Heart left ventricle (tissue), 16 donors: ENCODE measurements at regions of chr3 and their contacts with region 1.

Region 1: GRCh38 chr3:53938645-53939044 is 47.0 kb upstream of the SELENOK start:
- DNase-seq: no peak
- ATAC-seq: peak in 2 of 4 donors; percentile 53 to 67
- H3K4me3 ChIP-seq: no peak overlapping the region
- H3K27ac ChIP-seq: no peak overlapping the region
- H3K4me1 ChIP-seq: no peaks in the 10 kb centered on the region
- H3K27me3 ChIP-seq: peaks cover 0 to 35% (median 2%) of the 10 kb centered on the region in 9 donors
- CTCF ChIP-seq: peak; percentile 66 to 84 (median 74)
- POLR2A ChIP-seq: no peak

Region 2: GRCh38 chr3:53436828-53437227 is 501.8 kb before region 1 on chr3:
- intact Hi-C with region 1: no loop called
- DNase-seq: no peak
- ATAC-seq: no peak
- H3K4me3 ChIP-seq: no peak overlapping the region
- H3K27ac ChIP-seq: no peak overlapping the region
- H3K4me1 ChIP-seq: no peaks in the 10 kb centered on the region
- H3K27me3 ChIP-seq: peaks cover 0 to 3% (median 0%) of the 10 kb centered on the region in 9 donors
- CTCF ChIP-seq: no peak
- POLR2A ChIP-seq: no peak

Region 3: DNA sequence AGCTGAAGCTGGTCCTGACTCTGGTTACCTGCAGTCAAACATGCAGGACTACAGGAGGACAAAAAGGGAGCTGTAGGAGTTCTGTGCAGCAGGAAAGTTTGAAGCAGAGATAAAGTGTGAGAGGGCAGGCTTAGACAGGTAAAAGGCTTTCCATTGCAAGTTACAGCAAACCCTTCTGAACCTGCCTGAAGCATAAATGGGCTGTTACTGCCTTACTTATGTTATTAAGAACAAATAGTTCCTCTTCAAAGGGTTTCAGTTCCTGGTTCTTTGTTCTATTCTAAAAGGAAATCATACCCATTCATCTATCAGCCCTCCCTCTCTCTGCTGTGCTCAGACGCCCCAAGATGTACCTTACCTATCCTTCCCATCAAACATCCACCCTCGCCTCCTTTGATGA is 131.3 kb after region 1 on chr3:
- intact Hi-C with region 1: loop called in 1 of 10 experiments (anchors 10 kb)
- DNase-seq: no peak
- ATAC-seq: no peak
- H3K4me3 ChIP-seq: no peak overlapping the region
- H3K27ac ChIP-seq: no peak overlapping the region
- H3K4me1 ChIP-seq: no peaks in the 10 kb centered on the region
- H3K27me3 ChIP-seq: peaks cover 0 to 7% (median 0%) of the 10 kb centered on the region in 9 donors
- CTCF ChIP-seq: no peak
- POLR2A ChIP-seq: no peak

Region 4: DNA sequence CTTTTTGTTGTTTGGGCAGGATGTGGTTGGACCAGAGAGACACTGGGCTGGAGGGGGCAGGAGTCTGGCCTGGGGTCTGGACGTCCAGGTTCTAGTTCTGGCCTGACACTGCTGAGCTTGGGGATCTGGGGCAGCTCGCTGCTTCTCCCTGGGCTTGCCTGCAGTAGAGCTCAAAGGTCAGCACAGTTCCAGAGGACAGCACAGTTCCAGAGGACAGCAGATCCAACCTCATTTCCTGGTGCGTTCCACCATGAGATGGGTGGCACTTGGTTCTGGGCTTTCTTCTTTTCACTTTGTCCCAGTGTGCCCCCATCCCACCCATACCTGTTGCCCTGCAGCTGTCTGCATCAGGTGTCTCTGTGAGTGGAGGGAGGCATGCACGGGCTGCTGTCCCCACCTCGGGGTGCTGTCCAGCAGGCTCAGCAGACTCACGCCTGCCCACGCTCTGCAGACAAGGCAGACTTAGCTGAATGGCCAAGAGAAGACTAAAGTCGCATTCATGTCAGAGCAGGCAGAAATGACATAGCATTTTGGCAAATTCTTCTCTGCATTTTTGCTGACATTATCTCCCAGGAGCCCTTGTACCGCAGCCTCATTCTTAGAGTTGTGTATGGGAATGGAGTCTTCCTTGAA is 200.4 kb after region 1 on chr3:
- intact Hi-C with region 1: loop called in 4 of 10 experiments (anchors 10 kb)
- DNase-seq: no peak
- ATAC-seq: peak in 3 of 4 donors; percentile 25 to 54 (median 42)
- H3K4me3 ChIP-seq: no peak overlapping the region
- H3K27ac ChIP-seq: no peak overlapping the region
- H3K4me1 ChIP-seq: no peaks in the 10 kb centered on the region
- H3K27me3 ChIP-seq: no peaks in the 10 kb centered on the region
- CTCF ChIP-seq: no peak
- POLR2A ChIP-seq: no peak

Region 5: DNA sequence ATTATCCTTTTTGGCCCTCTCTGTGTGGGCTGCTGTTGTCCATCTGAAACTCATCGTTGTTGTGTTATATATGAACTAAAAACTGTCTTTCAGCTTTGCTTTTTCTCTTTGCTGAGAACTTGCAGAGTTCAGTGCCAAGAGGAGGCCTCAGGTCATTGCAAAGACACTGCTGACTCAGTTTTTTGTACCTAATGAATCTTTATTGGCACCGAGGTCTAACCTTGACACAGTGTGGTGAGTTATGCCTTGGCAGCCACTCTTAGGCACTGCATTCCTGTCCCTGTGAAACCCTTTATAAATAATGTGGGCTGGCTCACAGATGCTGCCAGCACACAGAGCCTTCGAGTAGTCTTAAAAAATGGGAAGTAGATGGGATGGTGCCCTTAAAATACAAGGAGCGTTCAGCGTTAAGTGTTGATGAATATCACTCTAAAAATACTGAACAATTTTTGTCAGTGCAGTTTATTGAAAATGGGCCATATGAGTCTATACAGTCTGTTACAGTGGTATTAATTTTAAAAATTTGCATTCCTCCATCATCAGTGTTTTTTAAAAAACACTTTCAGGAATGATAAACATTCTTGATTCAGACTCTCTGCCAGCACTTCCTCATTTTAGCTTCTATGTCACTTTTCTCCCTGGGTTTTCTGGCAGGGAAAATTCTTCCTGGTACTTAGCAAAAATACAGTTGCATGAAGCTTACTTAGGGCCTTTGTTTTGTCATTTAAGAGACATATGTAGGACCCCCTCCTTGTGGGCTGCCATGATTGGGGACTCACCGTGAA is 417.8 kb after region 1 on chr3:
- intact Hi-C with region 1: loop called in 1 of 10 experiments (anchors 5 kb)
- DNase-seq: peak in 4 of 5 donors; percentile 29 to 73 (median 51)
- ATAC-seq: peak; percentile 72 to 89 (median 88)
- H3K4me3 ChIP-seq: no peak overlapping the region
- H3K27ac ChIP-seq: peak overlapping the region in 5 of 12 donors; percentile 15 to 57 (median 32)
- H3K4me1 ChIP-seq: peaks cover 0 to 58% (median 24%) of the 10 kb centered on the region in 12 donors
- H3K27me3 ChIP-seq: no peaks in the 10 kb centered on the region
- CTCF ChIP-seq: no peak
- POLR2A ChIP-seq: no peak

Region 6: DNA sequence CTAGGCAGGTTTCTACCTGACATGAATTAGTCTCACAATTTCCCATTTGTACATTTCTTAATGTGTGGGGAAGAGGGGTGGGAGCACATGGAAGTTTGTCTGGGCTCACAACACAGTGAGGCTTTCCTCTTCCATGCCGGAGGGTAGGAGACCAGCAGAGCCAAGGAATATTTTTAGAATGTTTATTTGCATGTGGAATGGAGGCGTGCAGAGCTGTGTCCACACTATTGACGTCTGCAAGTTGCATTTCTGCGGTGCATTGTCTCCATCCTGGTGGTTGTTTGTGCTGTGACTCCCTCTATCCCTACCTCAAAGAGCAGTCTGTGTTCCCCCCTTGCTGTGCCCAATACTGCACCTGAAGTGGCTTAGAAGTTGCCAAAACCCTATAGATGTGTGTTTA is 1092.3 kb after region 1 on chr3:
- intact Hi-C with region 1: no loop called
- DNase-seq: no peak
- ATAC-seq: no peak
- H3K4me3 ChIP-seq: no peak overlapping the region
- H3K27ac ChIP-seq: no peak overlapping the region
- H3K4me1 ChIP-seq: no peaks in the 10 kb centered on the region
- H3K27me3 ChIP-seq: no peaks in the 10 kb centered on the region
- CTCF ChIP-seq: no peak
- POLR2A ChIP-seq: no peak

Region 7: GRCh38 chr3:55180936-55181535 is 1242.4 kb after region 1 on chr3:
- intact Hi-C with region 1: loop called in 2 of 10 experiments (anchors 10 kb)
- DNase-seq: peak in 1 of 5 donors; percentile 16
- ATAC-seq: no peak
- H3K4me3 ChIP-seq: no peak overlapping the region
- H3K27ac ChIP-seq: no peak overlapping the region
- H3K4me1 ChIP-seq: no peaks in the 10 kb centered on the region
- H3K27me3 ChIP-seq: peaks cover 0 to 15% (median 3%) of the 10 kb centered on the region in 9 donors
- CTCF ChIP-seq: peak; percentile 62 to 83 (median 75)
- POLR2A ChIP-seq: no peak